Lower leg skin (tissue), 4 donors: ENCODE measurements at regions of chr6 and their contacts with region 1.

Region 1: DNA sequence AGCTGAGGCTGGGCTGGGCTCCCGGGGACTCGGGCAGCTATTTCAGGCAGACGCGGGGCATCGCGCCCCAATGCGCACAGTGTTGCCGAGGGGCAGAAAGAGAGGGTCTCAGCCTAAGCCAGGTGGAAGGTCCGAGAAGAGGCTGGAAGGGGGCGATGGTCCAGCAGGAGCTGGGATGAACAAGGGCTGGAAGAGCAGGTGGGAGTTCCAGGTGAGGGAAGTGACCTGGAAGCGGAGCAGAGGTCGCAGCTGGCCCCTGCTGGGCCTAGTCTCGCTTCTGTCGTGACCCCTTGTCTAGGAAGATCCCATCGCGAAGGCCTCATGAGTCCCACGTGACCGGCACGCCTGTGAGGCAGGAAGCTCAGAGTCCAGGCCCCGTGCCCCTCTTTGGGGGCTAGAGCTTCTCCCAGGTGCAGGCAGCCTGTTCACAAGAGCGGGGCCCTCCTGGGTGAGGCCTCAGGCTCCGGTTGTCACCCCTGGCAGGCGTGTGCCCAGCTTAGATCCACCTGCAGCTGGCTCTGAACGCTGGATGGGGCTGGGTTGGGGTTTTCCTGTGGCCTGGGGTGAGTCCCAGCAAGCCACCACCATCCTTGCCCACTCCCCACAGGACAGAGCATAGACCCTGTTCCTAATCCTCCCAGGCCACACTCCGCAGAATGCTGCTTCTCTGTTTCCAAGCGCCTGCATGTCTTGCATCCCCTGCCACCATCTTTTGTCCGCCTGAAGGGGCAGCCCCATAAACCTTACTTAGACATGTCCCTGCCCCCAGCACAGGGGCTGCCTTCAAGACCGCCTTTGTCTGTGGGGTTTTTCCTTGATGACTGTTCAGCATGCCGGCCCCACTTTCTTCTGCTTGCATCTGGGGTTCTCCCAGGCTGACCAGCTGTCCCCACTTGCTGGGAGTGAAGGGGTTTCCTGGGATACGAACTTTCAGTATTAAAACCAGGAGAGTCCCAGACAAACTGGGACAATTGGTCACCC is 15.1 kb downstream of the SLC22A3 start:
- DNase-seq: no peak
- H3K4me3 ChIP-seq: no peak overlapping the region
- CTCF ChIP-seq: no peak
- POLR2A ChIP-seq: no peak

Region 2: DNA sequence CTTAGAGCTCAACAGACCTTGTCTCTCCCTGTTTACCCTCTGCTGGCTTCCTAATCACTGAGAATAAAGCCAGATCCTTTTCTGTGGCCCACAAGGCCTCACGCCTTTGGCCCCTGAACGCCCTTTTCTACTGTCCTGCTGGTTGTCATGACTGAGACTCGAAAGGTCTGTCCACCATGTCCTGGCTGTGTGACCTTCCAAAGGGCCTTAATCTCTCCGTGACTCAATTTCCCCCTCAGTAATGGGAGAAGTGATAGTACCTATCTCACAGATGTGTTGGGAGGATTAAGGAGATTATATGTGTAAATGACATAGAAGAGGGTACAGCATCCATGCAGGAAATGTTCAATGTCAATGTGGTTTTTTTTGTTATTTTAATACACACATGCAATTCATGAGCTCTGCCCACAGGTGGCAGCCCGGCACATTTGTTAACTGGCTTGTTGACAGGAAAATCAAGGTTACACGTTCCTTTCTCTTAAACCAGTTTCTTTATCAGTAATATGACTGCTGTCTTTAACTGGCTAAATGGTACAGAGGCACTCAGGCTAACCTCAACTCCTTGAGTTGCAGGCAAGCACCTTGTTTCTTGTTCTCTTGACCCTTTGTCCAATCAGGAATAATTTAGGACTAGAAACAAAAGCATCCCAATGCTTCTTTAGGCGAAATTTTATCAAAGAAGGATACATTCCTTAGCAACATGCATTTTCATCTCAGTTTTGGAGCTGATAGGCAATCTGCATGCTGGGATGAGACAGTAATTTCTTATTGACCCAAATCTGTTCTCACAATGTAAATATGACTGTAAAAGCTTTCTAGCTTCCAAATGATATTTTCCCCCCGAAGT is 225.1 kb before region 1 on chr6:
- intact Hi-C with region 1: loop called (anchors 10 kb)
- DNase-seq: peak in 1 of 2 donors; percentile 85
- H3K4me3 ChIP-seq: no peak overlapping the region
- CTCF ChIP-seq: no peak
- POLR2A ChIP-seq: no peak